Pancreas (tissue), 10 donors: ENCODE measurements at regions of chr2 and their contacts with region 1.

Region 1: GRCh38 chr2:23351388-23352141 is 33.4 kb upstream of the KLHL29 start:
- DNase-seq: peak; percentile 57 to 91 (median 80)
- ATAC-seq: peak; percentile 90 to 95 (median 94)
- H3K4me3 ChIP-seq: no peak overlapping the region
- H3K27ac ChIP-seq: peak overlapping the region in 1 of 4 donors; percentile 8
- H3K4me1 ChIP-seq: no peaks in the 10 kb centered on the region
- H3K27me3 ChIP-seq: no peaks in the 10 kb centered on the region
- CTCF ChIP-seq: peak; percentile 70 to 82 (median 75)

Region 2: GRCh38 chr2:22355816-22356433 is 995.6 kb before region 1 on chr2:
- intact Hi-C with region 1: loop called in 1 of 3 experiments (anchors 10 kb)
- DNase-seq: peak in 5 of 6 donors; percentile 5 to 83 (median 57)
- ATAC-seq: peak in 3 of 4 donors; percentile 62 to 73 (median 69)
- H3K4me3 ChIP-seq: no peak overlapping the region
- H3K27ac ChIP-seq: no peak overlapping the region
- H3K4me1 ChIP-seq: no peaks in the 10 kb centered on the region
- H3K27me3 ChIP-seq: no peaks in the 10 kb centered on the region
- CTCF ChIP-seq: peak; percentile 73 to 82 (median 78)